ENCODE measurements at regions of chr1 and their contacts with region 1.

Region 1: GRCh38 chr1:35769759-35770446 is at the start of gene CLSPN:
- DNase-seq: peak; percentile 98
- H3K4me3 Mint-ChIP-seq: peak within 1 kb of the TSS; percentile 93
- H3K27ac Mint-ChIP-seq: peak within 1 kb of the TSS; percentile 95
- H3K4me1 Mint-ChIP-seq: peaks cover 23% of the 10 kb centered on the region
- H3K27me3 Mint-ChIP-seq: no peaks in the 10 kb centered on the region
- total RNA-seq, gene CLSPN: 59.4 and 62.3 TPM in 2 replicates

Region 2: GRCh38 chr1:34852677-34853217 is 917.2 kb before region 1 on chr1:
- intact Hi-C with region 1: loop called (anchors 5 kb)
- DNase-seq: peak; percentile 97
- H3K4me3 Mint-ChIP-seq: no peak overlapping the region
- H3K27ac Mint-ChIP-seq: peak overlapping the region; percentile 3
- H3K4me1 Mint-ChIP-seq: peaks cover 11% of the 10 kb centered on the region
- H3K27me3 Mint-ChIP-seq: no peaks in the 10 kb centered on the region

Region 3: DNA sequence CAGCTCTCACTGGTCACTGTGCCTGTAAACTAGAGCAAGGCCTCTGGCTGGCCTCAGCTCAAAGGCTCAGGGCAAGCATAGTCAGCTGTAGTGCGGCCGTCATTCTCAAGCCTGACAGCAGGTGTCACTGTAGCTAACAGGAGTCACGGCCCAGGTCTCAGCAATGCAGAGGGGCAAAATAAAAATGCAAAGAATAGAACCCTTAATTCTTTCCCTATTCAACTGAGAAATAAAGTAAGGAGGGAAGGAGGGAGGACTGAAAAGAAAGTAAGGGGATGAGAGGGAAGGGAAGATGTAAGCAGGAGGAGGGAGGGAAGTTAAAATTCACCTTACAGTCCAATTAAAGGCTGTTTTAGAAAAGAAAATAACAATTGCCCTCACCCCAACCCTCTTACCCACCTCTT is 318.8 kb before region 1 on chr1:
- intact Hi-C with region 1: loop called (anchors 10 kb)
- DNase-seq: peak; percentile 94
- H3K4me3 Mint-ChIP-seq: no peak overlapping the region
- H3K27ac Mint-ChIP-seq: peak overlapping the region; percentile 48
- H3K4me1 Mint-ChIP-seq: peaks cover 29% of the 10 kb centered on the region
- H3K27me3 Mint-ChIP-seq: no peaks in the 10 kb centered on the region

Region 4: DNA sequence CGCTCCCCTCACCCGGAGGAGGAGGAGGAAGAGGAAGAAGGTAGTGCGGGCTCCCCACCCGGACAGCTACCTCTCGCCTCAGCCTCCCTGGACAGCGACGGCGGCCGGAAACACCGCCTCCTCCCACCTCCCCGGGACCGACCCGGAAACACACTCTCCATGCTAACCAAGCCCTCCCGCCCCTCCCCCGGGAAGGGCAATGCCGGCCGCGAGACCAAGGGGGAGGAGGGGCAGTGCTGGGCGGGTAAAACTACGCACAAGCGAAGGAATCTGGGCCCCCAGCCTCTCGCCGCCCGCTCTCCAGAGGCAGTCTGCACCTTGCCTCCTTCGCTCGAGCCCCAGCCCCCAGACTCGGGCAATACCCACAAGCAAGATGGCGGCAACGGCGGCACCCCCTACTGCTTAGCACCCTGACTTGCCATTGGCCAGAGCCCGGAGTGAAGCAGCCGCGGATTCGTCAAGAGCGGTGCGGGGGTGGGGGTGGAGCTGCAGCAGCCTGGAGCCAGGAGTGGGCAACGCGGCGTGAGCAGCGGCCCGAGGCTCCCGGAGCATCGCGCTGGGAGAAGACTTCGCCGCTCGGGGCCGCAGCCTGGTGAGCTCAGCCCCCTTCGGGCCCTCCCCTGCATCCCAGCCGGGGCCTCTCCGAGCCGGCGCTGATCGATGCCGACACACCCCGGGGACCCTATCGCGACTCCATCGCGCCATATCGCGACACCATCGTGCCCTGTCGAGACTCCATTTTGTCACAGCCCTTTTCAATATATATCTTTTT is 212.4 kb before region 1 on chr1 and contains the starts of genes KIAA0319L and NCDN:
- intact Hi-C with region 1: loop called (anchors 1 kb)
- DNase-seq: peak; percentile 98
- H3K4me3 Mint-ChIP-seq: peak within 1 kb of the TSS; percentile 98
- H3K27ac Mint-ChIP-seq: peak within 1 kb of the TSS; percentile 98
- H3K4me1 Mint-ChIP-seq: peaks cover 47% of the 10 kb centered on the region
- H3K27me3 Mint-ChIP-seq: no peaks in the 10 kb centered on the region
- total RNA-seq, gene KIAA0319L: 35.2 and 35.3 TPM in 2 replicates
- total RNA-seq, gene NCDN: 33.5 and 34.0 TPM in 2 replicates

Region 5: DNA sequence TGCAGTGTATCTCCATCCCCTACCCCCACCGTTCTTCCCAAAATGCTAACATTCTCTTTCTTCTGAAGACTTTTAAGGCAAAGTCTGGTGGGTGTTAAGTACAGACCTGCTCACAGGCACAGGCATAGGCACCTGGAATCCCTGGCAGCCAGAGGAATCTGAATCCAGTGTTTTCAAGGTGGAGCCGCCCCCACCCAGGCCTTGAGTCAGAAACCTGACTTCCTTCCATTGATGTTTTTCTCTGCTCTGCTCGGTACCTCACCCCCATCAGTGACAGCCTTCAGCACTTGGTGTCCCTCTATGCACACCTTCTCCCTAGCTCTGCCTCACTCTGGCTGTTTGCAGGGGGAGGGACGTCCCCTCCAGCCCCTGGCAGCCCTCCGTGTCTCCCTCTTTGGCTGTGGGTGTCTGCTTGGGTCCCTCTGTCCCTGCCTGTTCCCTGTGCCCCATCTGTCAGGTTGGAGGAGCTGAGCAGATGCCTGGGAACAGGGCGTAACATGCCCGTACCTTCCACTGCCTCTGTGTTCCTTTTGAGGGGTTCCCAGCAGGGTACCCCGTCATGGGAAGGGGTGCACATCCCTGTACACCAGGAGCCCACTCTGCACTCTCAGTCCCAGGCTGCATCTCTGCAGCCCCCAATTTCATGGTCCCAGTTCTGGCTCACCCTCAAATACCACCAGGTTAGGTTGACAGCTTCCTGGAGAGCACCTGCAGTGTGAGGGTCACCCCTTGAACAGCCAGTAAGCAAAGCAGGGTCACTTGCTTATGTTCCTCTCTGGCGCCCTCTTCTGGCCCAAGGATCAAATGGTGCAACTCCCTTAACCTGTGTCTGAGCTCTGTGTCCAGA is 205.6 kb before region 1 on chr1:
- intact Hi-C with region 1: loop called (anchors 1 kb)
- DNase-seq: peak; percentile 94
- H3K4me3 Mint-ChIP-seq: no peak overlapping the region
- H3K27ac Mint-ChIP-seq: peak overlapping the region; percentile 48
- H3K4me1 Mint-ChIP-seq: peaks cover 27% of the 10 kb centered on the region
- H3K27me3 Mint-ChIP-seq: no peaks in the 10 kb centered on the region

Region 6: DNA sequence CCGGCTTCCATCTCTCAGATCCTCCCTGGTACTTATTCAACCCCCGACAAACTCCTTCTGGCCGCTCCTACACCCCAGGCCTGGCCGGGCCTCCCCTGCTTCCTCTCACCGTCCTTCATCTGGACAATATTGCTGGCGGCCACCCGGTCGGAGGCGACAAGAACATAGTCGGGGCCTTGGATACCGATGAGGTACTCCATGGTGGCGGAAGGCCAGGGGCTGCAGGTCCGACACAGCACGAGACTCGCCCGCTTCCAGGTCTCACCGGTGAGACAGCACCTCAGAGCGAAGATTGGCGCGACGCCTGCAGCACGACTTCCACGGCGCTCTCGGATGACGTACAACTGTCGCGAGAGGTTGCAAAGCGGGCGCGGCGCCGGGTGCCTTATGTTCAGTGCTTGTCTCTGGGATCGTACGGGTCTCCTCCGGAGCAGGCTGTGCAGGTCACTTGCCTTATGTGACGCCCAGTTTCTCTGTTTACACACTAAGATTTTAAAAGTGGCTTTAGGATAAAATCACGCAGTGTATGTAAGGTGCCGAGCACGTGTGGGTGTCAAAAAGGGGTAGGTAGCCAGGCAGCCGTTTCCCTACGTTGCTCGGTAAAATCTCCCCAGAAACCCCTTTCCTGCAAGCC is 128.6 kb before region 1 on chr1 and contains the start of gene PSMB2:
- intact Hi-C with region 1: loop called (anchors 5 kb)
- DNase-seq: peak; percentile 99
- H3K4me3 Mint-ChIP-seq: peak within 1 kb of the TSS; percentile 100
- H3K27ac Mint-ChIP-seq: peak within 1 kb of the TSS; percentile 99
- H3K4me1 Mint-ChIP-seq: peaks cover 23% of the 10 kb centered on the region
- H3K27me3 Mint-ChIP-seq: peaks cover 26% of the 10 kb centered on the region
- total RNA-seq, gene PSMB2: 133 TPM in 2 replicates

Region 7: DNA sequence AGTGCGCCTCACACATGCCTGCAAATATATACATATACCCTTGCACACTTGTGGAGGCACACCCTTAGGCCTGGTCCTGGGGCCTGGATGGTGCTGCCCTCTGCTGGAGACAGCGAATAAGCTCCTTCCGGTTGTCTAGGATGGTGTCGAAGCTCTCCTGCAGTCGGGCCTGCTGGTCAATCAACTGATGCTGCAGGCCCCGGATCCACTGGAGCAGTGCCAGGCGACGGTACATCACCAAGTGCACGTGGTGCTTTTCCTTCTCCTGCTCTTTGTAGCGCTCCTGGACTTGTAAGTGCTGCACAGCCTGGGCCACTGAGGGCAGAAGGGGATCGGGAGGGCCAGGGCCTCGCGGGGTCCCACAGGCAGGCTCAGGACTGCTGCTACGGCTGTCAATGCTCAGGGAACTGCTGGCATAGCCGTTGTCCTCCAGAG is 54.3 kb before region 1 on chr1:
- intact Hi-C with region 1: loop called (anchors 2 kb)
- DNase-seq: peak; percentile 94
- H3K4me3 Mint-ChIP-seq: peak overlapping the region; percentile 65
- H3K27ac Mint-ChIP-seq: no peak overlapping the region
- H3K4me1 Mint-ChIP-seq: peaks cover 36% of the 10 kb centered on the region
- H3K27me3 Mint-ChIP-seq: no peaks in the 10 kb centered on the region

Measured in activated CD4-positive, alpha-beta T cell treated with anti-CD3 and anti-CD28 coated beads, Interleukin-2, amount 10 ng/mL, durations not matched to agents 24 days and 14 days (primary cell).